ENCODE measurements at regions of chr9 and their contacts with region 1.

Region 1: DNA sequence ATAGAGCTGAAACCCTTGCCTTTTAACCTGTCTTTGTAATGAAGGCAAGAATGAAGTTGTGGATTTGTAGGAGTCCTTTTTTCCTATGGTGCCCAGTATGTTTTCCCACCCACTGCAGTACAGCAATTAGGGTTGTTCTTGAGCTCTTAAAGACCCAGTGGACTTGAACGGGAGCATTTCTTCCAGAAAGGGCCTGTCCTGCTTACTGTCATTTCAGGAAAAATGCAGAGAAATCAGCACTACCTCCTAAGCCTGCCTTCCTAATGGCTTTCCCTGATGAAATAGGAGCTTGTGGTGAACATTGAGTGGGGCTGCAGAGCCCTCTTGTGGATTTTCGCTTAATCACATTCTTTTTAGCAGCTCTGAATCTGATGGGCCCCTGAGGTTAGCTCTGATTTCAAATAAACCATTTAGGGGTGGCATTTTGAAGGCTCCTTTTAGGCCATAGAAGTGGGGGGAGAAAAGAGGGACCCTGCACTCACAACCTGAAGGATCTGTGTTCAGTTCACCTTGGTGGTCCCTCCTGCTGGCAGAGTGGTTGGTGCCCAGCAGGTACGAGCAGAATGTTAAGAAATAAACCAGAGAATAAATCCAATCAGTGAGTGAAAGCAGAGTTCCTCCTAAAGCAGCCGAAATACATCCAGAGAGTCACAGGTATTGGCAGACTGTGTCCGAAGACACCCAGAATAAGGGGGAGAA is 188.0 kb upstream of the KLF9 start:
- DNase-seq: peak; percentile 85
- H3K4me3 ChIP-seq: peak overlapping the region in 3 of 4 donors; percentile 6 to 21 (median 20)
- H3K27ac ChIP-seq: peak overlapping the region; percentile 80 to 98 (median 89)
- H3K4me1 ChIP-seq: peaks cover 0 to 32% (median 28%) of the 10 kb centered on the region in 4 donors
- H3K27me3 ChIP-seq: no peaks in the 10 kb centered on the region
- CTCF ChIP-seq: peak; percentile 76 to 90 (median 82)
- EP300 ChIP-seq: peak in 1 of 4 donors; percentile 17
- POLR2A ChIP-seq: no peak

Region 2: GRCh38 chr9:69971643-69972449 is 630.6 kb before region 1 on chr9:
- intact Hi-C with region 1: loop called (anchors 10 kb)
- DNase-seq: peak; percentile 88
- H3K4me3 ChIP-seq: peak overlapping the region in 1 of 4 donors; percentile 11
- H3K27ac ChIP-seq: peak overlapping the region in 1 of 4 donors; percentile 46
- H3K4me1 ChIP-seq: peaks cover 0 to 13% (median 9%) of the 10 kb centered on the region in 4 donors
- H3K27me3 ChIP-seq: no peaks in the 10 kb centered on the region
- CTCF ChIP-seq: peak; percentile 73 to 92 (median 88)
- EP300 ChIP-seq: no peak
- POLR2A ChIP-seq: no peak

Region 3: GRCh38 chr9:70120834-70121510 is 481.5 kb before region 1 on chr9:
- intact Hi-C with region 1: loop called (anchors 5 kb)
- DNase-seq: peak; percentile 89
- H3K4me3 ChIP-seq: no peak overlapping the region
- H3K27ac ChIP-seq: peak overlapping the region; percentile 41 to 76 (median 62)
- H3K4me1 ChIP-seq: peaks cover 0 to 38% (median 21%) of the 10 kb centered on the region in 4 donors
- H3K27me3 ChIP-seq: no peaks in the 10 kb centered on the region
- CTCF ChIP-seq: peak; percentile 5 to 32 (median 19)
- EP300 ChIP-seq: no peak
- POLR2A ChIP-seq: no peak

Region 4: GRCh38 chr9:70160686-70161600 is 441.5 kb before region 1 on chr9:
- intact Hi-C with region 1: loop called (anchors 10 kb)
- DNase-seq: no peak
- H3K4me3 ChIP-seq: no peak overlapping the region
- H3K27ac ChIP-seq: peak overlapping the region; percentile 30 to 74 (median 58)
- H3K4me1 ChIP-seq: peaks cover 0 to 51% (median 44%) of the 10 kb centered on the region in 4 donors
- H3K27me3 ChIP-seq: no peaks in the 10 kb centered on the region
- CTCF ChIP-seq: no peak
- EP300 ChIP-seq: no peak
- POLR2A ChIP-seq: no peak

Region 5: GRCh38 chr9:70258692-70259511 is 343.6 kb before region 1 on chr9 and contains the start of gene SMC5:
- intact Hi-C with region 1: loop called (anchors 5 kb)
- DNase-seq: peak; percentile 94
- H3K4me3 ChIP-seq: peak within 1 kb of the TSS; percentile 71 to 77 (median 74)
- H3K27ac ChIP-seq: peak within 1 kb of the TSS; percentile 90 to 95 (median 91)
- H3K4me1 ChIP-seq: peaks cover 0 to 74% (median 57%) of the 10 kb centered on the region in 4 donors
- H3K27me3 ChIP-seq: no peaks in the 10 kb centered on the region
- CTCF ChIP-seq: no peak
- EP300 ChIP-seq: no peak
- POLR2A ChIP-seq: peak; percentile 91 to 95
- total RNA-seq, gene SMC5: 20.1 to 31.6 (median 23.4) TPM

Region 6: DNA sequence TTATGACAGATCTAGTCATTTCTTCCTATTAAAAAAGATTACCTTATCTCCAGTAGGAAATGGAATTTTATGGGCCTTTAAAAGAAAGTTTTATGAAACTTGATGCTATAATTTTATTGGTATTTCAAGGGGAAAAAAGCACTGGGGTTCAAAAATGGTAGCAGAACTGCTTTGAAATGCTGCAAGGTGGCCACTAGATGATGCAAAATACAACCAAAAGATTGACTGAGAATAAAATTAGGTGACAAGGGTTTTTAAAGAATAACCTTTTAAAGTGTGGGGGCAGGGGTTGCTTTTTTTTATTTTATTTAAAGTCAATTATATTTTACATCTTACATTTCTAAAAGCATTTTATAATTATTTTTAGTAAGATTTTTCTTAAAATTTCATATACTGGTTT is 249.7 kb before region 1 on chr9:
- intact Hi-C with region 1: loop called (anchors 2 kb)
- DNase-seq: no peak
- H3K4me3 ChIP-seq: no peak overlapping the region
- H3K27ac ChIP-seq: peak overlapping the region; percentile 14 to 51 (median 34)
- H3K4me1 ChIP-seq: peaks cover 0 to 10% (median 4%) of the 10 kb centered on the region in 4 donors
- H3K27me3 ChIP-seq: no peaks in the 10 kb centered on the region
- CTCF ChIP-seq: peak; percentile 70 to 91 (median 72)
- EP300 ChIP-seq: no peak
- POLR2A ChIP-seq: no peak

Region 7: DNA sequence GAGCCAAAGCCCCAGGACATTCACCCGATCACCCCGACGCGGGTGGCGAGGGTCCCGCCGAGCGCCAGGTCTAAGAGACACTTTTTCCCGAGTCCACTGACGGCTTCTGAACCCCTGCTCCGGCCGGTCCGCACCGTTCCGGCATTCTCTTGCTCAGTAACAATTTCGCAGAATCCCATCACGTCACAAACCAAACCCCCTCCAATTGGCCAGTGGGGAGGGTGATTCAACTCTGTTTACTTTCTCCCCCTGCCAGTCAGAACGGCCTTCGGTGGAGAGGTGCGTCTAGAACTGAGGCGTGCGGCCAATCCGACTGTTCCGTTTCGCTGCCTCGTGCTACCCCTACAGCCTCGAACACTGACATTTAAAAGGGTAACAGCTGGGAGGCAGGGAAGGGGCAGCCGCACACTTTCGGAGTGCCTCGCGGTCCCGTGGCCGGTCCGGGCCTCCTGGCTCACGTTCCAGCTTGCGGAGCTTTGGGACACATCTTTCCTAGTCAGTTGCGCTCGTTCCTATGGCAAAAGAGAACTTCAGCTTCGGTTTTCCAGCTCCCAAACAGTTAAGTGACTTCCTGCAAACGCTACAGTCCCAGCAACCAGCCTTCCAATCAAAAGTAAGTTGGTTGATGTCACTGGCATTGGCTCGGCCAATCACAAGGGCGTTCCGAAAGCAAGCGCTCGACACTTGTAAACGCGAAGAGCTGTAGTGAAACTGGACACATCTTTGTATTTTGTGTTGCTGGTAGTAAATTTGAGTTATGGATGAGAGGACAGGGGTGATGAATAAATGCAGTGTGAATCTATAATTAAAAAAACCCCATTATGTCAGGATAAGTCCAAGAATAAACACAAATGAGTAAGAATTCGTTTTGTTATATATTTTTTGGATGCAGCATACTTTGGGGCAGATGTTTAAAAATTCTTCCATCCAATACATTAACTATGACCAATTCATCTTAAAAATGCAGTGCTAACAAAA is 188.4 kb before region 1 on chr9 and contains the start of gene KLF9:
- intact Hi-C with region 1: loop called (anchors 1 kb)
- DNase-seq: peak; percentile 100
- H3K4me3 ChIP-seq: peak within 1 kb of the TSS; percentile 79 to 96 (median 84)
- H3K27ac ChIP-seq: peak within 1 kb of the TSS; percentile 98 to 100 (median 99)
- H3K4me1 ChIP-seq: peaks cover 0 to 54% (median 46%) of the 10 kb centered on the region in 4 donors
- H3K27me3 ChIP-seq: no peaks in the 10 kb centered on the region
- CTCF ChIP-seq: no peak
- EP300 ChIP-seq: peak; percentile 83 to 97 (median 93)
- POLR2A ChIP-seq: peak; percentile 97
- total RNA-seq, gene KLF9: 120 to 184 (median 159) TPM